Adrenal gland (tissue), 19 donors: ENCODE measurements at regions of chr1 and their contacts with region 1.

Region 1: GRCh38 chr1:206982216-206982615 is 12.0 kb upstream of the FCAMR start:
- DNase-seq: peak; percentile 49 to 80 (median 56)
- H3K4me3 ChIP-seq: no peak overlapping the region
- H3K27ac ChIP-seq: no peak overlapping the region
- H3K4me1 ChIP-seq: no peaks in the 10 kb centered on the region
- H3K27me3 ChIP-seq: no peaks in the 10 kb centered on the region
- CTCF ChIP-seq: peak; percentile 29 to 70 (median 60)
- POLR2A ChIP-seq: no peak

Region 2: DNA sequence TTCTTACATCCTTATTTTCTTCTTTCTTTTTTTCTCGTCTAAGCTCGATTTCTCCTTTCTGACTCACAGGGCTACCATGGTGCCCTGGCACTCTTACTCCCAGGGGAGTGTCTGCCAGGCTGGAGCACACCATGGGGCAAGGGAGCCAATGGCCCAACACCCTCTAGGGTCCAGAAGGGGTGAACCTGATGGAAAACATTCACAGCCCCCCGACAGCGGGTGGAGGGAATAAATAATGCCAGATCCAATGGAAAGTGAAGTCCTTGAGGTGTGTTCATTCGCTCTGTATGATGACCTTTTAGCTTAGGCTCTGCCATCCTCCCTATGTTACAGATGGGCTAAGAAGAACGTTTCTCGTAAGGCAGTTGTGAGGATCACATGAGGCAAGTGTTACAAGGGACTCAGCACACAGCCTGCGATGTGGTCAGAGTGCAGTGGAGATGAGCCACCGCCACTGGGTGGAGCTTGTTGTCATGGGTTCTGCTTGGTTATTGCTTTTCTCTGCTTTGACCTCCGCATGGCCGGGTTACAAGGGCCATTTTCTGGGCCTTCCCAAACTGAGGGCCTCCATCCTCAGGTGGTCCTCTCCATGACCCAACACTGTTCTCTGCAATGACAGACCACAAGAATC is 57.0 kb before region 1 on chr1:
- intact Hi-C with region 1: loop called in 1 of 2 experiments (anchors 10 kb)
- DNase-seq: peak in 5 of 7 donors; percentile 39 to 72 (median 45)
- H3K4me3 ChIP-seq: no peak overlapping the region
- H3K27ac ChIP-seq: no peak overlapping the region
- H3K4me1 ChIP-seq: no peaks in the 10 kb centered on the region
- H3K27me3 ChIP-seq: no peaks in the 10 kb centered on the region
- CTCF ChIP-seq: no peak
- POLR2A ChIP-seq: no peak

Region 3: GRCh38 chr1:207227131-207227630 is 245.0 kb after region 1 on chr1:
- intact Hi-C with region 1: no loop called
- DNase-seq: no peak
- H3K4me3 ChIP-seq: no peak overlapping the region
- H3K27ac ChIP-seq: no peak overlapping the region
- H3K4me1 ChIP-seq: peaks cover 8 to 12% of the 10 kb centered on the region in 2 donors
- H3K27me3 ChIP-seq: no peaks in the 10 kb centered on the region
- CTCF ChIP-seq: no peak
- POLR2A ChIP-seq: no peak

Region 4: DNA sequence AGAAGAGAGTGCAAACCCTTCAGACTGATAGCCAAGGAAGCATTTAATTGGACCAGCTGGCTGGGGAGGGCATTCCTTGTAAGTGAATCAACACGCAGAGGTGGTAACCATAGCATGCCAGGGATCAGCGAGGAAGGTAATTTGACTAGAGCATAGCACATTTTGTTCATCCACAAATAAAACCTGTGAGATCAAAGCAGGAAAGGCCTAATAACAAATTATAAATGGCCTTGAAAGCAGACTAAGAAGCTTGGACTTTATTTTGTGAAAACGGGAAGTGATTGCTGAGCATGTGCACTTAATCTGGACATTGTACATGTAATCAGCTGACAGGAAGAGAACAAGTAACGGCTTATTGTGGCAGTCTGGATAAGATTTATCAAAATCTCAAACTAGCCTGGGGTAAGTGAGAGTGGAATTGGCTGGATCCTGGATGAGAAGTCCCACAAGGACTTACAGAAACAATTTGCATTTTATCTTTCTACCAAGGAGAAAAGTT is 327.6 kb after region 1 on chr1:
- intact Hi-C with region 1: no loop called
- DNase-seq: peak; percentile 45 to 83 (median 70)
- H3K4me3 ChIP-seq: peak overlapping the region in 1 of 4 donors; percentile 38
- H3K27ac ChIP-seq: peak overlapping the region; percentile 5 to 81 (median 70)
- H3K4me1 ChIP-seq: peaks cover 23 to 48% of the 10 kb centered on the region in 2 donors
- H3K27me3 ChIP-seq: no peaks in the 10 kb centered on the region
- CTCF ChIP-seq: no peak
- POLR2A ChIP-seq: peak in 1 of 2 donors; percentile 27